ENCODE measurements at regions of chr3 and their contacts with region 1.

Region 1: GRCh38 chr3:49839193-49839809 is 17.1 kb downstream of the TRAIP start:
- DNase-seq: peak; percentile 80 to 94 (median 84)
- H3K4me3 ChIP-seq: no peak overlapping the region
- H3K27ac ChIP-seq: peak overlapping the region in 1 of 5 donors; percentile 19
- H3K4me1 ChIP-seq: peaks cover 0 to 5% of the 10 kb centered on the region in 2 donors
- H3K27me3 ChIP-seq: no peaks in the 10 kb centered on the region
- CTCF ChIP-seq: peak; percentile 86 to 95 (median 91)
- POLR2A ChIP-seq: no peak

Region 2: DNA sequence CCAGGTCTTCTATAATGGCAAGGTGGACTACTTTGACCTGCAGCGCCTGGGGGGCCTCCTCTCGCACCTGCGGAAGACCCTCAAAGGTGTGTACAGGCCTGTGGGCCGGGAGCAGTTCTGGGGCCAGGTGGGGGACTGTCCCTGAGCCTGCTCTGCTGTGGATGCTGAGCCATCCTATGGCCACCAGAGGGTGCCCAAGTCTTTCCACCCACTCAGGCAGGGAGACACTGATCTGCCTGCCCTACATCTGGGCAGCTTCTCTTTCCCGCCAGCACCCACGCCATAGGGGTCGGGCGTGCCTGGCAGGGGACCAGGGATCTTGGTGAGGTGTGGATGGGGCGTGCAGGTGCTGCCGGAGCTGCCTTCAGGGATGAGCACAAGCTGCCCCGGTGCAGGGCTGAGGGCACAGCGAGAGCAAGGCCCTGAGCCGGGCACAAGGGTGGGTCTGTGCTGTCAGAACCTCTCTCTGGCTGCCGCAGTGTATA is 135.8 kb before region 1 on chr3:
- intact Hi-C with region 1: loop called in 1 of 2 experiments (anchors 10 kb)
- DNase-seq: peak; percentile 65 to 84 (median 76)
- H3K4me3 ChIP-seq: no peak overlapping the region
- H3K27ac ChIP-seq: no peak overlapping the region
- H3K4me1 ChIP-seq: no peaks in the 10 kb centered on the region
- H3K27me3 ChIP-seq: no peaks in the 10 kb centered on the region
- CTCF ChIP-seq: peak; percentile 64 to 89 (median 80)
- POLR2A ChIP-seq: no peak

Region 3: GRCh38 chr3:49802719-49803464 is 36.4 kb before region 1 on chr3 and contains the start of gene INKA1:
- intact Hi-C with region 1: loop called in 1 of 2 experiments (anchors 2 kb)
- DNase-seq: peak; percentile 80 to 94 (median 91)
- H3K4me3 ChIP-seq: peak within 1 kb of the TSS; percentile 66 to 83 (median 76)
- H3K27ac ChIP-seq: peak within 1 kb of the TSS in 4 of 5 donors; percentile 61 to 87 (median 78)
- H3K4me1 ChIP-seq: peaks cover 7 to 44% of the 10 kb centered on the region in 2 donors
- H3K27me3 ChIP-seq: no peaks in the 10 kb centered on the region
- CTCF ChIP-seq: peak; percentile 74 to 95 (median 88)
- POLR2A ChIP-seq: peak; percentile 35 to 45
- total RNA-seq, gene INKA1: 1.8 to 5.5 (median 3.1) TPM

Region 4: DNA sequence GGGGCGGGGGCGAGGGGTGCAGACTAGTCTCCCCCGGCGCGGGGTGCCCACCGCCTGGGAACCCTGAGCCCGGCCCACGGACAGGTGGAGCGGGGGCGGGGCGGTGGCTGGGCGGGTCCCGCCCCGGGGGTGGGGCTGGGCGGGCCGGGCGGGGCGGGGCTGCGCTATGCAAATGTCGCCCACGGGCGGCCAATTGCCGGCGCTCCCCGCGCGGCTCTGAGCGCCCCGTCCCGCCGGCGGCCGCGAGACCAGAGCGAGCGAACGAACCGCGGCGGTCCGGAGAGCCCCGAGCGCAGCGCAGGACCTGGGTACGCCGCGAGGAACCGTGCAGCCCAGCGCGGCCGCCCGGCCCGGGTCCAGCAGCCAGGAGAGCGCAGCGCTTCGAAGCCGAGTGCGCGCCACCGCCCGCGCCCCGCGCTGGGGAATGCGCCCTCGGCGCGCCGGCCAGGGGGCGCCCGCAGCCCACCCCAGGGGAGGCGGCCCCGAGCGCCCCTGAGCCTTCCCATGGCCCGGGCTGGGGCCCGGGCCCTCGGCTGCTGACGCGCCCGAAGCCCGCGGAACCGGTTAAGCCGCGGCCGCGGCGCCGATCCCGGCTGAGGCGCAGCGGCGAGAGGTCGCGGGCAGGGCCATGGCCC is 315.7 kb after region 1 on chr3 and contains the start of gene SEMA3F:
- intact Hi-C with region 1: no loop called
- DNase-seq: peak; percentile 62 to 81 (median 71)
- H3K4me3 ChIP-seq: peak within 1 kb of the TSS in 2 of 4 donors; percentile 34 to 82
- H3K27ac ChIP-seq: peak within 1 kb of the TSS in 2 of 5 donors; percentile 38 to 49
- H3K4me1 ChIP-seq: peaks cover 4 to 12% of the 10 kb centered on the region in 2 donors
- H3K27me3 ChIP-seq: no peaks in the 10 kb centered on the region
- CTCF ChIP-seq: no peak
- POLR2A ChIP-seq: peak in 1 of 2 donors; percentile 61
- total RNA-seq, gene SEMA3F: 1.6 to 21.1 (median 13.3) TPM